CD4-positive, alpha-beta memory T cell (primary cell): ENCODE measurements at regions of chr3 and their contacts with region 1.

Region 1: GRCh38 chr3:31531992-31532586 is 636 bp upstream of the STT3B start:
- DNase-seq: peak; percentile 98
- H3K4me3 ChIP-seq: peak overlapping the region; percentile 9 to 84
- H3K4me3 Mint-ChIP-seq: peak overlapping the region in 7 of 8 donors; percentile 92 to 99 (median 98)
- H3K27ac ChIP-seq: peak overlapping the region; percentile 88
- H3K27ac Mint-ChIP-seq: peak overlapping the region in 6 of 7 donors; percentile 97 to 99 (median 98)
- H3K4me1 ChIP-seq: peaks cover 31% of the 10 kb centered on the region
- H3K4me1 Mint-ChIP-seq: peaks cover 9 to 33% (median 16%) of the 10 kb centered on the region in 4 donors
- H3K27me3 ChIP-seq: no peaks in the 10 kb centered on the region
- H3K27me3 Mint-ChIP-seq: no peaks in the 10 kb centered on the region

Region 2: GRCh38 chr3:30035935-30036567 is 1496.0 kb before region 1 on chr3:
- CTCF ChIA-PET with region 1: no interaction called
- POLR2A ChIA-PET with region 1: no interaction called
- intact Hi-C with region 1: no loop called
- DNase-seq: no peak
- H3K4me3 ChIP-seq: no peak overlapping the region
- H3K4me3 Mint-ChIP-seq: no peak overlapping the region
- H3K27ac ChIP-seq: no peak overlapping the region
- H3K27ac Mint-ChIP-seq: no peak overlapping the region
- H3K4me1 ChIP-seq: no peaks in the 10 kb centered on the region
- H3K4me1 Mint-ChIP-seq: peaks cover 0 to 1% (median 0%) of the 10 kb centered on the region in 4 donors
- H3K27me3 ChIP-seq: peaks cover 2% of the 10 kb centered on the region
- H3K27me3 Mint-ChIP-seq: peaks cover 18 to 23% of the 10 kb centered on the region in 2 donors

Region 3: DNA sequence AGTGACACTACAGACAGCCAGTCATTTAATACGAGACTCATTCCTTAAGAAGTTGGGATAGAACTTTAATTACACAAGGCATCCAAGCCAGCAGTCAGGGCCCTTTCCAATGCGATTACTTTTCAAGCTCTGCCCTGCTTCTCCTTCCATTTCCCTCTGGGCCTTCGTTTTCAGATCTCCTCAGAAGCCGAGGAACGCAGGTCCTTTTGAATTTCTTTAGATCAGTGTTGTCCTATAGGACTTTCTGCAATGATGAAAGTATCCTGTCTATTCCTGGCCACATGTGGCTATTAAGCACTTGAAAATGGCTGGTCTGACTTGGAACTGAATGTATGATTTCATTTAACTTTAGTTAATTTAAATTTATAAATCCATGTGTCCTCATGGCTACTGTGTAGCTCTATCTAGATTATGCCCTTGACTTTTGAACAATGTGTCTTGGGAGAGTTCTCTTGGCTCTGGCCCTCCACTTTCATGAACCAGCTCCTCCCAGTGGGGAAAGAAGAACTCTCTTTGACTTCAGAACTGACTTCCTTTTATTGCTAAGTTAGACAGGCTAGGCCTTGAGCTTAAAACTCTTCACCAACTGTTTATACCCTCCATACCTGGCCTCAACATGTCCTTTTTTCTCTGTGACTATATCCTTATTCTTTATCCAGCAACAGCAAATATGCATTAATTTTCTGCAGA is 903.0 kb before region 1 on chr3:
- CTCF ChIA-PET with region 1: no interaction called
- POLR2A ChIA-PET with region 1: interaction called, 3 read pairs
- intact Hi-C with region 1: loop called (anchors 5 kb)
- DNase-seq: peak in 4 of 5 donors; percentile 38 to 54 (median 44)
- H3K4me3 ChIP-seq: no peak overlapping the region
- H3K4me3 Mint-ChIP-seq: peak overlapping the region in 7 of 8 donors; percentile 55 to 82 (median 64)
- H3K27ac ChIP-seq: peak overlapping the region; percentile 60
- H3K27ac Mint-ChIP-seq: peak overlapping the region; percentile 89 to 97 (median 94)
- H3K4me1 ChIP-seq: peaks cover 99% of the 10 kb centered on the region
- H3K4me1 Mint-ChIP-seq: peaks cover 71 to 98% (median 84%) of the 10 kb centered on the region in 4 donors
- H3K27me3 ChIP-seq: no peaks in the 10 kb centered on the region
- H3K27me3 Mint-ChIP-seq: no peaks in the 10 kb centered on the region

Region 4: DNA sequence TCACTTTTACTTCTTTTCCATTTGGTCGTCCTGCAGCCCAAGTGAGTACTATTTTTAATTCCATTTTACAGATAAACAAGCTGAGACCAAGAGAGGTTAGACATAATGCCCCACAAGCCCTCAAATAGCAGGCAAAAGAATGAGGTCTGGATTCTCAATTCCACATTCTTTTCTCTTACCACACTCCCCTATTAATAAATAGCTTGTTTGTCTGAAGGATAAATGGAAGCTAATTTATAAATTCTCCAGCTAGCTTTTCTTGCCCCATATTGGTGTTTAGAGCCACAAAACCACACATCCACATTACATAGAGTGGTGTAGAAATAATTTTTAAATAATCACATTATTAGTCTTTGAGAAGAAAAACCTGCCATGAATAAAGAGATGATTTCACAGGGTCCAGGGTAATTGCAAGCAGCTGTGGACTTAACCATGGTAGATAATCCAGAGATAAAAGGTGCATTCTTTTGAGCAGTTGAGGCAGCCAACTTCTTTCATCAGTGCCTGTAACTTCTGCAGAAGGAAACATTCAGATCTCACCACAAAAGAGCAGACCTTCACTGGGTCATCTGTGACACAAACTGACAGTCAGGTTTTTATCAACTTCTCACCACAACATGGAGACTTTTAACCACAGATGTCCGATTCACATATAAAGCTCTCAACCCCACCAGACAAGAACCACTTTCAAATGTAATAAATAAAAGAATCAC is 312.8 kb before region 1 on chr3:
- CTCF ChIA-PET with region 1: interaction called, 11 read pairs
- POLR2A ChIA-PET with region 1: interaction called, 181 read pairs
- intact Hi-C with region 1: loop called (anchors 5 kb)
- DNase-seq: no peak
- H3K4me3 ChIP-seq: no peak overlapping the region
- H3K4me3 Mint-ChIP-seq: peak overlapping the region in 6 of 8 donors; percentile 3 to 70 (median 40)
- H3K27ac ChIP-seq: no peak overlapping the region
- H3K27ac Mint-ChIP-seq: peak overlapping the region in 5 of 7 donors; percentile 8 to 72 (median 48)
- H3K4me1 ChIP-seq: peaks cover 99% of the 10 kb centered on the region
- H3K4me1 Mint-ChIP-seq: peaks cover 81 to 98% (median 92%) of the 10 kb centered on the region in 4 donors
- H3K27me3 ChIP-seq: no peaks in the 10 kb centered on the region
- H3K27me3 Mint-ChIP-seq: no peaks in the 10 kb centered on the region

Region 5: GRCh38 chr3:31462050-31462569 is 70.0 kb before region 1 on chr3:
- CTCF ChIA-PET with region 1: interaction called, 48 read pairs
- POLR2A ChIA-PET with region 1: interaction called, 187 read pairs
- intact Hi-C with region 1: loop called (anchors 1 kb)
- DNase-seq: peak; percentile 81 to 88 (median 88)
- H3K4me3 ChIP-seq: peak overlapping the region; percentile 42 to 51
- H3K4me3 Mint-ChIP-seq: peak overlapping the region; percentile 68 to 92 (median 81)
- H3K27ac ChIP-seq: peak overlapping the region; percentile 45
- H3K27ac Mint-ChIP-seq: peak overlapping the region; percentile 88 to 98 (median 94)
- H3K4me1 ChIP-seq: peaks cover 68% of the 10 kb centered on the region
- H3K4me1 Mint-ChIP-seq: peaks cover 48 to 74% (median 61%) of the 10 kb centered on the region in 4 donors
- H3K27me3 ChIP-seq: no peaks in the 10 kb centered on the region
- H3K27me3 Mint-ChIP-seq: no peaks in the 10 kb centered on the region

Region 6: DNA sequence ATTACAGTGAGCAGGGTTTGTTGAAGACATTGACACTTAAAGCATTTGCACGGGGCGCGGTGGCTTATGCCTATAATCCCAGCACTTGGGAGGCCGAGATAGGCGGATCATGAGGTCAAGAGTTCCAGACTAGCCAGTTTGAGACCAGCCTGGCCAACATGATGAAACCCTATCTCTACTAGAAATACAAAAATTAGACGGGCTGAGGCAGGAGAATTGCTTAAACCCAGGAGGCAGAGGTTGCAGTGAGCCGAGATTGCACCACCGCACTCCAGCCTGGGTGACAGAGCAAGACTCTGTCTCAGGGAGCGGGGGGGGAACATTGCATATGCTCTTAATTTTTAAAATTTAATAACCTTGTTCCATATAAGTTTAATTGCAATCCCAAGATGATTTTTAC is 12.5 kb after region 1 on chr3:
- CTCF ChIA-PET with region 1: interaction called, 21 read pairs
- POLR2A ChIA-PET with region 1: interaction called, 42 read pairs
- intact Hi-C with region 1: loop called (anchors 1 kb)
- DNase-seq: no peak
- H3K4me3 ChIP-seq: no peak overlapping the region
- H3K4me3 Mint-ChIP-seq: peak overlapping the region in 7 of 8 donors; percentile 7 to 63 (median 50)
- H3K27ac ChIP-seq: no peak overlapping the region
- H3K27ac Mint-ChIP-seq: peak overlapping the region in 3 of 7 donors; percentile 24 to 62 (median 52)
- H3K4me1 ChIP-seq: peaks cover 96% of the 10 kb centered on the region
- H3K4me1 Mint-ChIP-seq: peaks cover 67 to 92% (median 81%) of the 10 kb centered on the region in 4 donors
- H3K27me3 ChIP-seq: no peaks in the 10 kb centered on the region
- H3K27me3 Mint-ChIP-seq: no peaks in the 10 kb centered on the region

Region 7: GRCh38 chr3:31596176-31596575 is 64.1 kb after region 1 on chr3:
- CTCF ChIA-PET with region 1: interaction called, 4 read pairs
- POLR2A ChIA-PET with region 1: interaction called, 11 read pairs
- intact Hi-C with region 1: no loop called
- DNase-seq: no peak
- H3K4me3 ChIP-seq: no peak overlapping the region
- H3K4me3 Mint-ChIP-seq: peak overlapping the region in 5 of 8 donors; percentile 6 to 44 (median 32)
- H3K27ac ChIP-seq: no peak overlapping the region
- H3K27ac Mint-ChIP-seq: peak overlapping the region in 4 of 7 donors; percentile 27 to 70 (median 50)
- H3K4me1 ChIP-seq: peaks cover 47% of the 10 kb centered on the region
- H3K4me1 Mint-ChIP-seq: peaks cover 41 to 61% (median 49%) of the 10 kb centered on the region in 4 donors
- H3K27me3 ChIP-seq: no peaks in the 10 kb centered on the region
- H3K27me3 Mint-ChIP-seq: no peaks in the 10 kb centered on the region

Region 8: DNA sequence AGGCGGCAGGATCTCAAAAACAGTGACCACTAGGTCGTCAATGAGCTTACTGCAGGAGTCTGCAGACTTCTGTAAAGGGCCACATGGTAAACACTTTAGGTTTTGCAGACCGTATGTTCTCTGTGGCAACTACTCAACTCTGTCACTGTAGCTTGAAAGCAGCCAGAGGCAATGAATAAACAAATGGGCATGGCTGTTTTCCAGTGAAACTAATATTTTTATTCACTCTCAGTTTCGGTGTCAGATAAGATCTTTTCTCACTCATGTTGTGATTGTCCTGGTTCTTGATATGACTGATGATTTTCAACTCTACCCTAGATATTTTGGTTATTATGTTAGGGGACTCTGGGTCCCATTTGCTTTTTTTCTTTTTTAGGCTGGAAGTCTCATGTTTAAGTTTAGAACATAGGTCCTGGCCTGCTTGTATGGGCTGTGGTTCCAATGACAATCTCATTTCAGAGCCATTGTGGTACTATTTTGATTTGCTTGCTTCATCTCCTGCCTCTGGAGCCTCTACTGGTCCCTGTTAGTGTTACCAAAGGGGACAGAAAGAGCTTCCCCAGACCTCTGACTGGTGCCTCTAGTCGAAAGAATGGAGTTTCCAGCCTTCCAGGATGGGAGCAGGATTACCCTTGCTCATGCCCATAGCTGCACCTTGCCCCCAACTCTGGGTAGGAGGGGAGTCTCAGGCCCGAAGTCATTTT is 222.6 kb after region 1 on chr3:
- CTCF ChIA-PET with region 1: no interaction called
- POLR2A ChIA-PET with region 1: no interaction called
- intact Hi-C with region 1: no loop called
- DNase-seq: no peak
- H3K4me3 ChIP-seq: no peak overlapping the region
- H3K4me3 Mint-ChIP-seq: peak overlapping the region in 1 of 8 donors; percentile 23
- H3K27ac ChIP-seq: no peak overlapping the region
- H3K27ac Mint-ChIP-seq: no peak overlapping the region
- H3K4me1 ChIP-seq: peaks cover 14% of the 10 kb centered on the region
- H3K4me1 Mint-ChIP-seq: peaks cover 13 to 25% (median 17%) of the 10 kb centered on the region in 4 donors
- H3K27me3 ChIP-seq: no peaks in the 10 kb centered on the region
- H3K27me3 Mint-ChIP-seq: peaks cover 3% of the 10 kb centered on the region in 2 donors

Region 9: GRCh38 chr3:32684800-32685542 is 1152.9 kb after region 1 on chr3 and contains the start of gene CNOT10:
- CTCF ChIA-PET with region 1: no interaction called
- POLR2A ChIA-PET with region 1: interaction called, 3 read pairs
- intact Hi-C with region 1: loop called (anchors 1 kb)
- DNase-seq: peak; percentile 95 to 98 (median 97)
- H3K4me3 ChIP-seq: peak within 1 kb of the TSS; percentile 50 to 95
- H3K4me3 Mint-ChIP-seq: peak within 1 kb of the TSS; percentile 90 to 94 (median 93)
- H3K27ac ChIP-seq: peak within 1 kb of the TSS; percentile 80
- H3K27ac Mint-ChIP-seq: peak within 1 kb of the TSS; percentile 87 to 99 (median 97)
- H3K4me1 ChIP-seq: peaks cover 30% of the 10 kb centered on the region
- H3K4me1 Mint-ChIP-seq: peaks cover 28 to 45% (median 37%) of the 10 kb centered on the region in 4 donors
- H3K27me3 ChIP-seq: no peaks in the 10 kb centered on the region
- H3K27me3 Mint-ChIP-seq: no peaks in the 10 kb centered on the region
- total RNA-seq, gene CNOT10: 46.5 to 47.6 TPM